Mammary epithelial cell (primary cell): ENCODE measurements at regions of chr2 and their contacts with region 1.

Region 1: GRCh38 chr2:85551698-85552678 is 9.3 kb downstream of the GGCX start:
- DNase-seq: peak; percentile 71
- H3K4me3 ChIP-seq: no peak overlapping the region
- H3K27ac ChIP-seq: no peak overlapping the region
- H3K4me1 ChIP-seq: no peaks in the 10 kb centered on the region
- H3K27me3 ChIP-seq: no peaks in the 10 kb centered on the region
- CTCF ChIP-seq: peak; percentile 95

Region 2: DNA sequence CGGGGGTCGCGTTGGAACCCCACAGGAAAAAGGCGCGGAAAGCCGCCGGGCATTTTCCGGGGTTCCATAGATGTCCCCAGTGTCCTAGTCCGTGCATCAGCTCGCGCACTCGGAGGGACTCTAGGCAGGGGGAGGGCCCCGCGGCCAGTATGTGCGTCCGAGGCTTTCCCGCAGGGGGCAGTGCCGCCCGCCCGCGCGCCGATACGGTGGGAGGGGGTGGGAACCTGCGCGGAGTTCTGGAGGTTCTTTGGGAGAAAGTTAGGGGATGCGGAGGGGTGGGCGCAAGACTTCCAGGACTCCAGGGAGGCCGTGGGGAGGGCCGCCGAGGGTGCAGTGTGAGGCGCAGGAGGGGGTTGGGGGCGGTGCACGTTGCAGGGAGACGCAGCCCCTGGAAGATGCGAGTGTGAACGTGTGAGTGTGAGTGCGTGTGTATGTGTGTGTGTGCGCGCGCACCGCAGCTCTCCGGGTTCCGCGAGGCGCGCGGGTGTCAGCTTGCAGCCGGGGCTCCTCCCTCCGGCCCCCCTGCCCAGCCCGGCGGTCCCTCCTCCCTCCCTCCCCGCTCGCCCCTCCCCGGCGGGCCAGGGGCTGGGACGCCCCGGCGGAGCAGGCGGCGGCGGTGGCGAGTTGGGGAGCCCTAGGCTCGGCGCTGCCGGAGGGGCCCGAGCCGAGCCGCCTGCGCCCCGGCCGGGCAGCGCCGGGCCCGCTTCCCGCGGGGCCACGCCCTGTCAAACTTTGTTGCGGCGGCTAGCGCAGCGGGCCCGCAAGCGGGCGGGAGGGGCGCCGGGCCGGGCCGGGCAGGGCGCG is 419.0 kb before region 1 on chr2 and contains the start of gene TCF7L1:
- CTCF ChIA-PET with region 1: interaction called, 4 read pairs
- dilution Hi-C with region 1: no loop called
- in situ Hi-C with region 1: no loop called
- intact Hi-C with region 1: loop called (anchors 5 kb)
- DNase-seq: peak; percentile 86
- H3K4me3 ChIP-seq: peak within 1 kb of the TSS; percentile 89 to 98 (median 97)
- H3K27ac ChIP-seq: peak within 1 kb of the TSS; percentile 67
- H3K4me1 ChIP-seq: peaks cover 18% of the 10 kb centered on the region
- H3K27me3 ChIP-seq: no peaks in the 10 kb centered on the region
- CTCF ChIP-seq: peak; percentile 57 to 82
- total RNA-seq, gene TCF7L1: 6.3 to 26.4 TPM

Region 3: GRCh38 chr2:85327822-85328617 is 224.0 kb before region 1 on chr2 and contains the start of gene TGOLN2:
- CTCF ChIA-PET with region 1: interaction called, 26 read pairs
- dilution Hi-C with region 1: no loop called
- in situ Hi-C with region 1: no loop called
- intact Hi-C with region 1: loop called (anchors 2 kb)
- DNase-seq: peak; percentile 88
- H3K4me3 ChIP-seq: peak within 1 kb of the TSS; percentile 75 to 84 (median 80)
- H3K27ac ChIP-seq: peak within 1 kb of the TSS; percentile 84
- H3K4me1 ChIP-seq: peaks cover 17% of the 10 kb centered on the region
- H3K27me3 ChIP-seq: no peaks in the 10 kb centered on the region
- CTCF ChIP-seq: no peak
- total RNA-seq, gene TGOLN2: 64.8 to 83.0 TPM

Region 4: GRCh38 chr2:85390941-85391669 is 160.9 kb before region 1 on chr2:
- CTCF ChIA-PET with region 1: no interaction called
- dilution Hi-C with region 1: no loop called
- in situ Hi-C with region 1: no loop called
- intact Hi-C with region 1: loop called (anchors 1 kb)
- DNase-seq: no peak
- H3K4me3 ChIP-seq: no peak overlapping the region
- H3K27ac ChIP-seq: no peak overlapping the region
- H3K4me1 ChIP-seq: no peaks in the 10 kb centered on the region
- H3K27me3 ChIP-seq: no peaks in the 10 kb centered on the region
- CTCF ChIP-seq: peak; percentile 37 to 66

Region 5: GRCh38 chr2:85504778-85505323 is 47.1 kb before region 1 on chr2:
- CTCF ChIA-PET with region 1: no interaction called
- dilution Hi-C with region 1: no loop called
- in situ Hi-C with region 1: no loop called
- intact Hi-C with region 1: no loop called
- DNase-seq: peak; percentile 99
- H3K4me3 ChIP-seq: no peak overlapping the region
- H3K27ac ChIP-seq: peak overlapping the region; percentile 73
- H3K4me1 ChIP-seq: peaks cover 41% of the 10 kb centered on the region
- H3K27me3 ChIP-seq: no peaks in the 10 kb centered on the region
- CTCF ChIP-seq: no peak

Region 6: DNA sequence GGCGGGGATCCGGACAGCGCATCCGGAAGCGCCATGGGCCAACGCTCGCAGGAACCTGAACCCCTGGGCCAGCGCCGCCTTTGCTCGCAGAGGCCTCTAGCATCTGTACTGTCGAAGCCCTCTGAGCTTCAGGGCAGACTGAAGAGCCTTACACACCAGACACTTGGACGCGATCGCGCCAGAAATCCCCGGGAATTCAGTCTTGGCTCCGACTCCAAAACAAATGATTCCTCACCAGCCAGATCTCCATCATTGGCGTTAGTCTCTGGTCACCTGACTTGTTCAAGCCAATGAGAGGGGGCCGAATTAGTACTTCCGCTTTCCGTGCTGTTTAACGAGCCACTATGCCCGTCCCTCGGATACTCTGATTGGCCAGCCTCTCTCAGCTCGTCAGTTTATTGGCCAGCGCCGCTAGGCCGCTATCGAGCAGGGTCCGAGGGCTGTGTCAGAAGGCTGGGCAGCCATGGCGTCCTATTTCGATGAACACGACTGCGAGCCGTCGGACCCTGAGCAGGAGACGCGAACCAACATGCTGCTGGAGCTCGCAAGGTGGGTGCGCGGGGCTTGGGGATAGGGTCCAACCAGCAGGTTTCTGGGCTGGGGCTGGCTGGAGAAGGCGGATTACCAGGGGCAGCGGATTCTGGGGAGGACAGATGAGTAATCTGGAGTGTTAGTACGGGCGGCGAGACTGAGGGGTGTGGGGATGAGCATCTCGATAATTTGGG is 43.5 kb after region 1 on chr2 and contains the start of gene RNF181:
- CTCF ChIA-PET with region 1: interaction called, 11 read pairs
- dilution Hi-C with region 1: no loop called
- in situ Hi-C with region 1: no loop called
- intact Hi-C with region 1: no loop called
- DNase-seq: peak; percentile 99
- H3K4me3 ChIP-seq: peak within 1 kb of the TSS; percentile 73 to 93 (median 92)
- H3K27ac ChIP-seq: peak within 1 kb of the TSS; percentile 75
- H3K4me1 ChIP-seq: peaks cover 19% of the 10 kb centered on the region
- H3K27me3 ChIP-seq: no peaks in the 10 kb centered on the region
- CTCF ChIP-seq: no peak
- total RNA-seq, gene RNF181: 101 to 109 TPM